RWPE1 (cell line): ENCODE measurements at regions of chr17 and their contacts with region 1.

Region 1: DNA sequence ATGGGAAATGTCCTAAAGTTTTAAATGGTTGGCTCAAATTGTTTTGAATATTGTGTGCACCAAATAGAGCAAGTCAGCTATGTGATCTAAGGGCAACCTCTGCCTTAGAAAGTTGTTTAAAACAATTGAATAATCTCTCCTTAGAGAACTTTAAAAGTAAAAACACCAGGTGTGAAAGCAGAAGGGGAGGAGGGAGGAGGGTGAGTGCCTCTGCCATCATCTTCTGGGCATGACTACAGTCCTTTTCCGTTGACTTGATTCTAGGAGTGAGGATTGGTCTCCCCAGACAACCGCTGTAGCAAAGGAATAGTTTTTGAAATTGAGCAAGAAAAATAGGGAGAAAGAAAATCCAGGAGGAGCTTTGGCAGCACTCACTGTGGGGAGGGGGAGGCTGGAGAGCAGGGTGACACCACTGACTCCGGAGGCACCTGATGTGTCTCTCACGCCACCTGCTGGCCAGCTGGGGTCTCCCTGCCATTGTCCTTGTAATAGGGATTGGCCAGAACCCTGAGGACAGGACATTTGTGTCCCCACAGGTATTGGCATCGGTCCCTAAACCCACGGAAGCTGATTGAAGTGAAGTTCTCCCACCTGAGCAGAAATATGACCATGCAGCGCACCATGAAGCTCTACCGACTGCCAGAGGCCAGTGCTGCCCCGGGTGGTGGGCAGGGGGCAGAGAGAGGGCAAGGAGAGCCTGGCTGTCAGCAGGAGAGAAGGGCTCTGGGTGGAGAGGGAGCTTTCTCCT is 33.3 kb downstream of the PLCD3 start:
- DNase-seq: peak; percentile 89
- H3K27ac ChIP-seq: peak overlapping the region; percentile 95
- CTCF ChIP-seq: peak; percentile 96

Region 2: GRCh38 chr17:44919885-44920564 is 179.0 kb before region 1 on chr17:
- CTCF ChIA-PET with region 1: interaction called, 29 read pairs
- POLR2A ChIA-PET with region 1: no interaction called
- DNase-seq: peak; percentile 81
- H3K27ac ChIP-seq: peak overlapping the region; percentile 60
- CTCF ChIP-seq: peak; percentile 90

Region 3: GRCh38 chr17:45190503-45191255 is 91.6 kb after region 1 on chr17:
- CTCF ChIA-PET with region 1: no interaction called
- POLR2A ChIA-PET with region 1: no interaction called
- DNase-seq: no peak
- H3K27ac ChIP-seq: no peak overlapping the region
- CTCF ChIP-seq: no peak